Heart right ventricle (tissue), 16 donors: ENCODE measurements at regions of chrX and their contacts with region 1.

Region 1: DNA sequence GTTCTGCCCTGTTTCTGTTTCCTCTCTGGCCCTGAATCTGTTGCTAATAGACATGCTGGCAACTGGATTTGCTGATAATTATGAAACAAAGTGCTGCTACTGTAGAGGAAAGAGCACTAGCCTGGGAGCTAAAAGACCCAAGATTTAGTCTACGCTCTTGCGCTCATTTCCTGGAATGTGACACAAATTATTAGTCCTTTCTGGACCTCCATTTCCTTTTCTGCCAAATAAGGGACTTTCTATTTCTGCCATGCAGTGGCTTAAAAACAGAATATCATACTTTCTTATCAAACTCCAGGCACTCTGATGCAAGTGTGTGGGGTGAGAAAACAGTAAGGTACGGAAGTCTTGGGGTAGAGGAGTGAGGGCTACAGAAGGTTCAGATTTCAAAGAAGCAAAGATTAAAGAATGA is 48.3 kb upstream of the GPR174 start:
- DNase-seq: peak in 1 of 2 donors; percentile 3
- ATAC-seq: peak in 5 of 8 donors; percentile 16 to 73 (median 49)
- H3K4me3 ChIP-seq: no peak overlapping the region
- H3K27ac ChIP-seq: peak overlapping the region in 5 of 10 donors; percentile 51 to 72 (median 64)
- H3K4me1 ChIP-seq: peaks cover 0 to 9% (median 0%) of the 10 kb centered on the region in 9 donors
- H3K27me3 ChIP-seq: peaks cover 0 to 6% (median 0%) of the 10 kb centered on the region in 7 donors
- CTCF ChIP-seq: no peak

Region 2: DNA sequence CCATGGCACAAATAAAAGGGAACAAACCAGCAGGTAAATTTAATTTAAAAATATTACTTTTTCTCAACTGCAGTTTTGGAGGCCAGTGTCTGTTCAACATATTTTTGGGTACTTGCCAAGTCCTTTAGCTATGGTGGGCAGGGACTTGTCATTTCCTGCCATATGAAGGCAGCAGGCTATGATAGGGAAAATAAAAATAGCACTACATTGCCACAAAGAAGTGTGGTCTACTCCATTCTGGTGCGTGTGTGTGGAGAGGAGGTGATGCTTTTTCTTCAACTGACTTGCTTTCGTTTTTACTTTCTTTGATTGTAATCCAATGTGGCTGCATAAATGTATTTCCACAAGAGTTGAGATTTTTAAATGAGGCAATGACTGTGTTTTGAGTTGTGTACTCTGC is 65.5 kb after region 1 on chrX:
- intact Hi-C with region 1: loop called in 2 of 10 experiments (anchors 5 to 10 kb)
- DNase-seq: no peak
- ATAC-seq: peak in 6 of 8 donors; percentile 38 to 72 (median 64)
- H3K4me3 ChIP-seq: peak overlapping the region in 6 of 10 donors; percentile 3 to 40 (median 26)
- H3K27ac ChIP-seq: peak overlapping the region in 5 of 10 donors; percentile 58 to 77 (median 64)
- H3K4me1 ChIP-seq: peaks cover 0 to 5% (median 0%) of the 10 kb centered on the region in 9 donors
- H3K27me3 ChIP-seq: no peaks in the 10 kb centered on the region
- CTCF ChIP-seq: no peak

Region 3: GRCh38 chrX:79263550-79263949 is 167.4 kb after region 1 on chrX:
- intact Hi-C with region 1: loop called in 2 of 10 experiments (anchors 2 to 10 kb)
- DNase-seq: no peak
- ATAC-seq: no peak
- H3K4me3 ChIP-seq: no peak overlapping the region
- H3K27ac ChIP-seq: no peak overlapping the region
- H3K4me1 ChIP-seq: peaks cover 0 to 22% (median 0%) of the 10 kb centered on the region in 9 donors
- H3K27me3 ChIP-seq: peaks cover 0 to 7% (median 0%) of the 10 kb centered on the region in 7 donors
- CTCF ChIP-seq: no peak